A673 (cell line): ENCODE measurements at regions of chr10 and their contacts with region 1.

Region 1: GRCh38 chr10:99845837-99846382 is 63.5 kb downstream of the ABCC2 start:
- DNase-seq: peak; percentile 93
- H3K4me3 ChIP-seq: no peak overlapping the region
- H3K27ac ChIP-seq: no peak overlapping the region
- H3K4me1 ChIP-seq: peaks cover 18% of the 10 kb centered on the region
- H3K27me3 ChIP-seq: no peaks in the 10 kb centered on the region
- CTCF ChIP-seq: peak; percentile 96

Region 2: GRCh38 chr10:99966306-99966705 is 120.4 kb after region 1 on chr10:
- CTCF ChIA-PET with region 1: interaction called, 6 read pairs
- POLR2A ChIA-PET with region 1: interaction called, 4 read pairs
- intact Hi-C with region 1: loop called (anchors 10 kb)
- DNase-seq: no peak
- H3K4me3 ChIP-seq: no peak overlapping the region
- H3K27ac ChIP-seq: no peak overlapping the region
- H3K4me1 ChIP-seq: peaks cover 10% of the 10 kb centered on the region
- H3K27me3 ChIP-seq: no peaks in the 10 kb centered on the region
- CTCF ChIP-seq: no peak

Region 3: DNA sequence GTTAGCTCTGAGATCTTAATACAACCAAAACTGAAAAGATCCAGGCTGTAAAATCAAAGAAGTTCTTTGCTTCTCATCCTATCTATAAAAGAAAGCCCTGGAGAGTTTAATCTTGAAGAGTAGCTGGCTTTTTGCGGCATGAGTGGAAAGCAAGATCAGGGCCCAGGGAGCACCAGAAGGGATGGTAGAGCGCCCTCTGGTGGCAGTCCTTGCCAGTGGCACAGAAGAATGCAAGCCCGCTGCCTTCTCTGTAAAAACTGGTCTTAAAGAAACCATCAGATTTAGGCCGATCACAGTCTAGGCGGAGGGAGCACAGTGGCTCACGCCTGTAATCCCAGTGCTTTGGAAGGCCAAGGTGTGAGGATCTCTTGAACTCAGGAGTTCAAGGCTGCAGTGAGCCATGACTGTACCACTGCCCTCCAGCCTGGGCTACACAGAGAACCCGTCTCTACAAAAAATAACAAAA is 200.1 kb after region 1 on chr10:
- CTCF ChIA-PET with region 1: interaction called, 35 read pairs
- POLR2A ChIA-PET with region 1: interaction called, 3 read pairs
- intact Hi-C with region 1: no loop called
- DNase-seq: peak; percentile 92
- H3K4me3 ChIP-seq: no peak overlapping the region
- H3K27ac ChIP-seq: no peak overlapping the region
- H3K4me1 ChIP-seq: peaks cover 27% of the 10 kb centered on the region
- H3K27me3 ChIP-seq: no peaks in the 10 kb centered on the region
- CTCF ChIP-seq: peak; percentile 94

Region 4: GRCh38 chr10:100185364-100186252 is 339.7 kb after region 1 on chr10 and contains the start of gene ERLIN1:
- CTCF ChIA-PET with region 1: no interaction called
- POLR2A ChIA-PET with region 1: no interaction called
- intact Hi-C with region 1: loop called (anchors 5 kb)
- DNase-seq: peak; percentile 98
- H3K4me3 ChIP-seq: peak within 1 kb of the TSS; percentile 66
- H3K27ac ChIP-seq: peak within 1 kb of the TSS; percentile 93
- H3K4me1 ChIP-seq: peaks cover 44% of the 10 kb centered on the region
- H3K27me3 ChIP-seq: no peaks in the 10 kb centered on the region
- CTCF ChIP-seq: 0 out of 2 replicates have a peak, but pooled peaks have one; percentile 19
- total RNA-seq, gene ERLIN1: 54.1 and 54.9 TPM in 2 replicates

Region 5: GRCh38 chr10:100338434-100339036 is 492.6 kb after region 1 on chr10:
- CTCF ChIA-PET with region 1: interaction called, 10 read pairs
- POLR2A ChIA-PET with region 1: no interaction called
- intact Hi-C with region 1: loop called (anchors 10 kb)
- DNase-seq: peak; percentile 79
- H3K4me3 ChIP-seq: no peak overlapping the region
- H3K27ac ChIP-seq: no peak overlapping the region
- H3K4me1 ChIP-seq: no peaks in the 10 kb centered on the region
- H3K27me3 ChIP-seq: no peaks in the 10 kb centered on the region
- CTCF ChIP-seq: peak; percentile 88

Region 6: DNA sequence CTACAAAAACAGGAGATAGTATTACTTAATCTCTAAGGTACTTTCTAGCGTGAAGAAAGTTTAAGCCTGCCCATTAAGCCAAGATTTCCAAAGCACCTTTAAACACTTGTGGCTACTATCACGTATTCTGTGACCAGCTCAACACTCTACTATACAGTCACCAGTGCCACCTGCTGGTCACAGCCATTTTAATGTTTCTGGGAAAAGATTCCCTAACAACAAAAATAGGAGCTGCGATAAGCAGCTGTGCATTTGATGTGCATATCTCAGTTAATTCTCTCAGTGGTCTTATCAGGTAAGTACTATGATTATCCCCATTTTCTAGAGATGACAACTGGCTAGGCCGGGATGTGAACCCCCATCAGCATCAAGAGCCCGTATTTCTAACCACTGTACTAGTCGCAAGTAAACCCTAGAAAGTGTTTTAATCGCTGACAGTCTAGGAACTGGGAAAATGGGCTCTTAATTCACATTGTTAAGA is 672.9 kb after region 1 on chr10:
- CTCF ChIA-PET with region 1: interaction called, 5 read pairs
- POLR2A ChIA-PET with region 1: no interaction called
- intact Hi-C with region 1: loop called (anchors 5 kb)
- DNase-seq: peak; percentile 81
- H3K4me3 ChIP-seq: peak overlapping the region; percentile 50
- H3K27ac ChIP-seq: no peak overlapping the region
- H3K4me1 ChIP-seq: peaks cover 7% of the 10 kb centered on the region
- H3K27me3 ChIP-seq: no peaks in the 10 kb centered on the region
- CTCF ChIP-seq: peak; percentile 85